H1 (cell line): ENCODE measurements at regions of chr5 and their contacts with region 1.

Region 1: DNA sequence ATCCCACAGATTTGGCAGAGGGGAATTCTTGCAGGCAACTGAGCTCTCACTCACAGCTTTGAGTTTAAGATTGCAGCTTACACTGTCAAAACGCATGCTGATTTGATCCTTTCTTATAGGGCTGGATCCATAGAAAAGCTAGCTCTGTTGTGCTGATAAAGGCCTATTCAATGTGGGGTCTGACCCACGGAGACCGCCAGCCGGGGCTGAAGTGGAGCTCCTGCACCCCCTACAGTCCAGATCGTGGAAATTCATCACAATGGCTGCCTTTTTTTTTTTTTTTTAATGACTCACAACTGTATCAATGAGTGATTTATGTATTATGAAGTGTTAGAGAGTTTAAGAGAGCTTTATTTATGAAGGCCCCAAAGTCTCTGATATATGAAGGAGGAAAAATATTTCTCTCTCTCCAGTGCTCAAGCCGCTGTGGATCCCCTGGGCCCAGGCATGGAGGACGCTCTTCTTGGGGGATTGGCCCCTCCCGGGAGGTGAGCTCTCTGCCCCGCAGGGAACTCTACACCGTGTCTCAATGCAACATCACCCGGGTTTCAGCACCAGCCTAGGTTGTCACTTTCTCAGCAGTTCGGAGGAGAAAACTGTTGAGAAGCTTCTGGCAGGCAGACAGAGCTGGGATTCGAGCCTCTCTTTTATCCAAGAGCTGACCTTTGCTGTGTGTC is 700.2 kb downstream of the IRX1 start:
- DNase-seq: peak; percentile 13 to 69
- H3K4me3 ChIP-seq: no peak overlapping the region
- H3K27ac ChIP-seq: no peak overlapping the region
- H3K4me1 ChIP-seq: peaks cover 0 to 2% (median 2%) of the 10 kb centered on the region in 4 experiments; a peak in 4 of 7 replicates
- H3K27me3 ChIP-seq: no peaks in the 10 kb centered on the region; a peak in 1 of 7 replicates
- CTCF ChIP-seq: peak; percentile 58 to 72 (median 71)
- EP300 ChIP-seq: no peak
- POLR2A ChIP-seq: no peak
- RAD21 ChIP-seq: peak; percentile 91 to 96

Region 2: DNA sequence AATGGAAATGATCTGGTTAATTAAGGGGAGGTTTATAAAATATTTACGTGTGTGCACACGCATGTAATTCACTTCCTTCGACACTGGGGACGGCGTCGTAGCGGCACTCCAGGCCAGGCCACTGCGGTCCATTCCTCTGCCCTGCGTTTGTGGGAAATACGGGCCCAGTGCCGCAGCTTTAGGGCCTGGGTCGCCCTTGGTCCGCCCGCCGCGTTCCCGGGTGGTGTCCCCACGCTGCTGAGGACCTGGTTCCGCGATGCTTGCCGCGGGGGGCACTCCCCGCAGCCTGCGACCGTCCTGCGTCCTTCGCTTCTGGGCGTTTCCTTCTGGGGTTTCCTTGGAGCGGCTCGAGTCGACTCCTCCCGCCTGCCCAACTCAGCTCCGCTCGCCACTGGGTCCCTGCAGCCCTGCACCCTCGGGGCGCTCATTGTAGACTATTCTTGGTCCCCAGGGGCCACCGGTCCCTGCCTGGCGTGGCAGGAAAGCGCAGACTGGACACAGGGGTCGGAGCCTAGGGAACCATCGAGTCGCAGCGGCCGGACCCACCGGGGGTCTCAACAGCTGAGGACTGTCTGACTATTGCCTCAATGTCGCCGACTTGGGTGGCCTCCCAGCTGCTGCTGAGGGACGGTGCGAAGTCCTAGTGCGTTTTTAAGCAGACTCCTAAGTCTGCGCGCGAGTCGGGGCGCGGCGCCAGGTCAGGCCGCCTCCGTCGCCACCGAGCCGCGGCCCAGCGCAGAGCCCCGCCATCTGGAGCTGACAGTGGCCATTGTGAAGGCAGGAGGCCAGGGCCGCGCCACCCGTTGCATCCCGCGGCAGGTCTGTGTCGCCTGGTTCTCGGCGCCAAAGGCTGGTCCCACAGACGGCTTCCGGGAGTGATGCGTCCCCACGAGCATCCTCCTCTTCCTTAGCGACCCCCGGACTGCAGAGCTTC is 704.6 kb before region 1 on chr5:
- CTCF ChIA-PET with region 1: interaction called, 11 read pairs
- POLR2A ChIA-PET with region 1: no interaction called
- DNase-seq: peak in 1 of 2 experiments; percentile 67
- H3K4me3 ChIP-seq: peak overlapping the region; percentile 22 to 55 (median 44); a peak in 7 of 8 replicates
- H3K27ac ChIP-seq: no peak overlapping the region
- H3K4me1 ChIP-seq: peaks cover 0 to 31% (median 17%) of the 10 kb centered on the region in 4 experiments; a peak in 6 of 7 replicates
- H3K27me3 ChIP-seq: peaks cover 63 to 88% (median 73%) of the 10 kb centered on the region in 4 experiments
- CTCF ChIP-seq: peak in 1 of 3 experiments; percentile 12; a peak in 1 of 4 replicates
- EP300 ChIP-seq: no peak
- POLR2A ChIP-seq: no peak
- RAD21 ChIP-seq: peak in 1 of 2 experiments; percentile 19; a peak in 1 of 4 replicates

Region 3: GRCh38 chr5:4142842-4143241 is 153.0 kb before region 1 on chr5:
- CTCF ChIA-PET with region 1: interaction called, 32 read pairs
- POLR2A ChIA-PET with region 1: no interaction called
- DNase-seq: no peak
- H3K4me3 ChIP-seq: no peak overlapping the region
- H3K27ac ChIP-seq: no peak overlapping the region
- H3K4me1 ChIP-seq: peaks cover 0 to 3% (median under 1%) of the 10 kb centered on the region in 4 experiments; a peak in 2 of 7 replicates
- H3K27me3 ChIP-seq: no peaks in the 10 kb centered on the region
- CTCF ChIP-seq: peak in 2 of 3 experiments; percentile 53 to 58; a peak in 3 of 4 replicates
- EP300 ChIP-seq: peak in 1 of 2 experiments; percentile 8; a peak in 1 of 3 replicates
- POLR2A ChIP-seq: no peak
- RAD21 ChIP-seq: peak; percentile 65 to 72

Region 4: GRCh38 chr5:4309026-4309425 is 13.2 kb after region 1 on chr5:
- CTCF ChIA-PET with region 1: interaction called, 11 read pairs
- POLR2A ChIA-PET with region 1: no interaction called
- DNase-seq: no peak
- H3K4me3 ChIP-seq: no peak overlapping the region
- H3K27ac ChIP-seq: no peak overlapping the region
- H3K4me1 ChIP-seq: peaks cover 0 to 2% (median 0%) of the 10 kb centered on the region in 4 experiments; a peak in 3 of 7 replicates
- H3K27me3 ChIP-seq: no peaks in the 10 kb centered on the region
- CTCF ChIP-seq: no peak
- EP300 ChIP-seq: no peak
- POLR2A ChIP-seq: no peak
- RAD21 ChIP-seq: no peak

Region 5: GRCh38 chr5:4640795-4641194 is 345.0 kb after region 1 on chr5:
- CTCF ChIA-PET with region 1: interaction called, 16 read pairs
- POLR2A ChIA-PET with region 1: no interaction called
- DNase-seq: peak in 1 of 2 experiments; percentile 31
- H3K4me3 ChIP-seq: no peak overlapping the region
- H3K27ac ChIP-seq: no peak overlapping the region
- H3K4me1 ChIP-seq: peaks cover 0 to 2% (median 0%) of the 10 kb centered on the region in 4 experiments; a peak in 1 of 7 replicates
- H3K27me3 ChIP-seq: no peaks in the 10 kb centered on the region
- CTCF ChIP-seq: peak; percentile 27 to 43 (median 38); a peak in 3 of 4 replicates
- EP300 ChIP-seq: no peak
- POLR2A ChIP-seq: no peak
- RAD21 ChIP-seq: peak; percentile 58 to 75